Prostate gland (tissue), 2 donors: ENCODE measurements at regions of chr16 and their contacts with region 1.

Region 1: DNA sequence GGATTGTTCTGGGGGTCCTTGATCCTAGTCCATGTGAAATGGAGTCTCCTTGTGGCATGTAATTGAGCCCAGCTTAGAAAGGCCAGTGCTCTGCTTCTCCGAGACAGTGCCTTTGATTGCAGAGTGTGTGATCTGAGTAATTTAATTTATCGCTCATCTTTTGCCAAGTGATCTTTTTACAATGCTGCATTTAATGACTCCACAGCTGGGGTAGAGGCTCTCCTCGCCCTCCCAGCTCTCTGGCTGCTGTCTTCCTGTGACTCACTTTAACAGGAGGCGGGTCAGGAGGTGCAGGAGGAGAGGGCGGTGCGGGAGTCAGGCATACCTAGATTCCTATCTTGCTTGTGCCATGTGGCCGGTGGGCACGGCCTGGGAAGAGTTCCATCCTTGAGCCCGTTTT is 113.4 kb upstream of the FOXF1 start:
- DNase-seq: peak; percentile 20
- H3K4me3 ChIP-seq: no peak overlapping the region
- H3K27ac ChIP-seq: peak overlapping the region; percentile 58 to 61
- H3K4me1 ChIP-seq: no peaks in the 10 kb centered on the region
- H3K27me3 ChIP-seq: no peaks in the 10 kb centered on the region
- CTCF ChIP-seq: no peak
- POLR2A ChIP-seq: no peak

Region 2: DNA sequence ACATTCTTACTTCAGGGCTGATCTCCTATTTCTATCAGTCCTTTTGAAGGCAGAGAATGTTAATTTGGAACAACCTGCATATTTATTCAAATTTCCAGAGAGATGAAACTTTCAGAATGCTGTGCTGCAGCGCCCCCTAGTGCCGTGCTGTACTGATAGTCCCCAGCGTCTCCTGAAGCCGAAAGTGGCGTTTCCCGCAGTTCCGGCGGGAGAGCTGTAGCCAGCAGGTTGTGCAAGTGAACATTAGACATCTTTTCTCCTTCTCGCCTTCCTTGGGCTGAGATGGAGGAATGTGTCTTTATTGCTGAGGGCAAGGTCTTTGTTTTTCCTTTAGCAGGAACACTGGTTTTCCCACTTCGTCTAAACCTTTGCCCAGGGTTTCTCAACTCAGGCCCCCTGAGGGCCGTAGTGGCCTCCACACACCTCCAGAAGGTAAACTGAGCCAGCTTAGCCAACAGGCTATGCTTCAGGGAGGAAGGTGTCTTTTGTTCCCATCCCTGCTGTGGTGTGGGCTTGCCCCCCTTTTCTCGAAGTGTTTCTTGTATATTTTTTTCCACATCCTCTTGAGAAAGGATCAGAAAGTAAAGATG is 1670.7 kb before region 1 on chr16:
- intact Hi-C with region 1: no loop called
- DNase-seq: peak; percentile 94
- H3K4me3 ChIP-seq: no peak overlapping the region
- H3K27ac ChIP-seq: peak overlapping the region in 1 of 2 donors; percentile 63
- H3K4me1 ChIP-seq: peaks cover 16% of the 10 kb centered on the region
- H3K27me3 ChIP-seq: no peaks in the 10 kb centered on the region
- CTCF ChIP-seq: peak; percentile 84 to 98 (median 94)
- POLR2A ChIP-seq: no peak

Region 3: DNA sequence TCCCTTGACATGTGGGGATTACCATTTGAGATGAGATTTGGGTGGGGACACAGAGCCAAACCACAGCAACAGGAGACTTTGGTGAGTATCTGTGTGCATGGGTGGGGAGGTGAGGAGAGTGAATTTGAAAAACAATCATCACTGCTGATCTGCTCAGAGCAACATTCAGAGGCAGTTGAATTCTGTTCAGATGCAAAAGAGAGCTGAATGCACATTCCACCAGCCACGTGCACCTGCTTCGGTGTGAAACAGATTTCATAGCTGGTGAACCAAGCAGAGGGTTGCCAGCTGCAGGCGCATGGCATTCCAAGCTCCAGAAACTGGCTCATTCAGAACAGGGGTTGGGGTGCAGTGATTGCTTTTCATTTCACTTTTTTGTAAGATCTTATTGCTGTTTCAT is 119.7 kb before region 1 on chr16:
- intact Hi-C with region 1: no loop called
- DNase-seq: no peak
- H3K4me3 ChIP-seq: no peak overlapping the region
- H3K27ac ChIP-seq: no peak overlapping the region
- H3K4me1 ChIP-seq: no peaks in the 10 kb centered on the region
- H3K27me3 ChIP-seq: no peaks in the 10 kb centered on the region
- CTCF ChIP-seq: no peak
- POLR2A ChIP-seq: no peak

Region 4: GRCh38 chr16:86363057-86363490 is 33.8 kb before region 1 on chr16:
- intact Hi-C with region 1: loop called (anchors 5 kb)
- DNase-seq: peak; percentile 77
- H3K4me3 ChIP-seq: no peak overlapping the region
- H3K27ac ChIP-seq: peak overlapping the region; percentile 16 to 66
- H3K4me1 ChIP-seq: no peaks in the 10 kb centered on the region
- H3K27me3 ChIP-seq: no peaks in the 10 kb centered on the region
- CTCF ChIP-seq: no peak
- POLR2A ChIP-seq: no peak

Region 5: DNA sequence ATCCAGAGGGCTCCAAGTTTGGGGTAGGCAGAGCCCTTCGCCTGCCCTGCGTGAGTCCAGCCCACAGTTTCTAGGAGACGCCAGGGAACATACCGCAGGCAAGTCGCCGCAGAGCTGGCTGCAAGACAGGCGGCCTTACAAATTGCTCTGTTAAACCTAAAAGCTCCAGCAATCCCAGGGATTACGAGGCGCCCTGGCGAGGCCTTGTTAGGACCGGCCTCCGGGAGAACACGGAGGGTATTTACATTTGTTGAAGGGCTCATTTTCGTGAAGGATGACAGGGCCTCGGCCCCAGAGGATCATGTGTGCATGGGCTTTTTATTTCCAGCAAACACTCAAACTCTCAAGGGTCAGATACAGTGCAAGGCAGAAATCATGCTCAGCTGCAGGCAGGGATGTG is 35.8 kb after region 1 on chr16:
- intact Hi-C with region 1: no loop called
- DNase-seq: no peak
- H3K4me3 ChIP-seq: no peak overlapping the region
- H3K27ac ChIP-seq: no peak overlapping the region
- H3K4me1 ChIP-seq: no peaks in the 10 kb centered on the region
- H3K27me3 ChIP-seq: no peaks in the 10 kb centered on the region
- CTCF ChIP-seq: no peak
- POLR2A ChIP-seq: no peak